Right ventricle myocardium superior (tissue), 1 donor: ENCODE measurements at regions of chr20 and their contacts with region 1.

Region 1: GRCh38 chr20:5529331-5530148 is 212.8 kb upstream of the PROKR2 start:
- DNase-seq: peak; percentile 91
- ATAC-seq: peak; percentile 95

Region 2: DNA sequence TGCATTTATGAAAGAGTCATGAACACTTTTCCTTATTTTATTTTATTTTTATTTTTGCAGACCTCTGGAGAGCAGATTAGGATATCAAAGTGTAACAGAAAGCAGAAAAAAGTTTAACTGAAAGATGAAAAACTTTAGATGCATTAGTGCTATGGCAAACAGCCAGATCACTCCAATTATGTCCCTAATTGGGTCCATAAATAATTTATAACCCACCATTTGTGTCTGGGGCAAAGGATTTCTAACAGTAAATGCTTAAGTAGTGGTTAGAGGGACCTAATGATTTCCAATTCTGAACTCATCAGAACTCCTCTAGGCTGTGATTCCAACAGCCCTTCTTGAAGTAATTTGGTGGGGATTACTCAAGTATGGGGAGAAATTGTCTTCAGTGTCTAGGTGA is 119.1 kb before region 1 on chr20:
- intact Hi-C with region 1: no loop called
- DNase-seq: no peak
- ATAC-seq: no peak

Region 3: GRCh38 chr20:5788385-5788895 is 258.9 kb after region 1 on chr20:
- intact Hi-C with region 1: loop called (anchors 2 kb)
- DNase-seq: peak; percentile 80
- ATAC-seq: peak; percentile 96

Region 4: GRCh38 chr20:5933802-5934436 is 404.4 kb after region 1 on chr20:
- intact Hi-C with region 1: loop called (anchors 10 kb)
- DNase-seq: no peak
- ATAC-seq: peak; percentile 79

Region 5: GRCh38 chr20:6074145-6074561 is 544.6 kb after region 1 on chr20:
- intact Hi-C with region 1: loop called (anchors 5 kb)
- DNase-seq: no peak
- ATAC-seq: peak; percentile 87